ENCODE measurements at regions of chr14 and their contacts with region 1.

Region 1: GRCh38 chr14:65412032-65412846 is at the start of gene FUT8:
- DNase-seq: peak; percentile 89 to 99
- H3K4me3 ChIP-seq: peak within 1 kb of the TSS; percentile 97
- H3K27ac ChIP-seq: peak within 1 kb of the TSS; percentile 90
- H3K4me1 ChIP-seq: peaks cover 40% of the 10 kb centered on the region
- H3K27me3 ChIP-seq: no peaks in the 10 kb centered on the region
- CTCF ChIP-seq: peak; percentile 63
- total RNA-seq, gene FUT8: 134 and 135 TPM in 2 replicates

Region 2: GRCh38 chr14:65102441-65103149 is 309.6 kb before region 1 on chr14 and contains the start of gene MAX:
- CTCF ChIA-PET with region 1: no interaction called
- POLR2A ChIA-PET with region 1: no interaction called
- intact Hi-C with region 1: loop called (anchors 2 kb)
- DNase-seq: peak; percentile 96 to 99
- H3K4me3 ChIP-seq: peak within 1 kb of the TSS; percentile 88
- H3K27ac ChIP-seq: peak within 1 kb of the TSS; percentile 46
- H3K4me1 ChIP-seq: peaks cover 14% of the 10 kb centered on the region
- H3K27me3 ChIP-seq: no peaks in the 10 kb centered on the region
- CTCF ChIP-seq: no peak
- total RNA-seq, gene MAX: 76.1 and 84.1 TPM in 2 replicates

Region 3: GRCh38 chr14:65229751-65230749 is 182.2 kb before region 1 on chr14:
- CTCF ChIA-PET with region 1: no interaction called
- POLR2A ChIA-PET with region 1: interaction called, 7 read pairs
- intact Hi-C with region 1: loop called (anchors 2 kb)
- DNase-seq: peak; percentile 42 to 59
- H3K4me3 ChIP-seq: no peak overlapping the region
- H3K27ac ChIP-seq: peak overlapping the region; percentile 24
- H3K4me1 ChIP-seq: peaks cover 71% of the 10 kb centered on the region
- H3K27me3 ChIP-seq: no peaks in the 10 kb centered on the region
- CTCF ChIP-seq: no peak

Region 4: GRCh38 chr14:65287264-65288131 is 124.7 kb before region 1 on chr14:
- CTCF ChIA-PET with region 1: interaction called, 5 read pairs
- POLR2A ChIA-PET with region 1: interaction called, 32 read pairs
- intact Hi-C with region 1: loop called (anchors 1 kb)
- DNase-seq: no peak
- H3K4me3 ChIP-seq: no peak overlapping the region
- H3K27ac ChIP-seq: no peak overlapping the region
- H3K4me1 ChIP-seq: peaks cover 29% of the 10 kb centered on the region
- H3K27me3 ChIP-seq: no peaks in the 10 kb centered on the region
- CTCF ChIP-seq: no peak

Region 5: DNA sequence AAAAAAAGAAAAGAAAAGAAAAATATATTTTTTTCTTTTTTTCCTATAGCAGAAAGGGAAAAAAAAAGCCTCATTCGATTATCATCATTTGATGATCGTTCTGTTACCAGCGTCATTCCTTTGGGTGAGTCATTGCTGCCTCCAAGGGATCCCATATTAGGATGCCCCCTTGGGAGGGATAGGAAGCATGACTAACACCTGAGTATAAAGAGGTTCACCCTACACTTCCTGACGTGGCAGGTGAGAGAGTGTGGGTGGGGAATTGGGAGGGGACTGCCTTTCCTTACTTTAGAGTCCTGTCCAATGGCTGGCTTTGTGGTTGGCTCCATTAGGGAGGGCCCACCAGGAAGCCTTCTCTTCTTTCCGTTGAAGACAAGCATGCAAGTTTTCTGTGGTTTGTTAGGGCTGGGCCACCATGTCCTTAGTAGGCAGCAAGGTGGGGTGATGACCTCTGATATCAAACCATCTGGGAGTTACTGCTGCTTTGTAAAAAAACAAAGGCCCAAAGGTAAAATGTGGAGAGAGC is 55.8 kb before region 1 on chr14:
- CTCF ChIA-PET with region 1: interaction called, 4 read pairs
- POLR2A ChIA-PET with region 1: interaction called, 13 read pairs
- intact Hi-C with region 1: loop called (anchors 1 kb)
- DNase-seq: peak; percentile 97 to 100
- H3K4me3 ChIP-seq: peak overlapping the region; percentile 54
- H3K27ac ChIP-seq: peak overlapping the region; percentile 95
- H3K4me1 ChIP-seq: peaks cover 82% of the 10 kb centered on the region
- H3K27me3 ChIP-seq: no peaks in the 10 kb centered on the region
- CTCF ChIP-seq: no peak; the same call in 1 of the 2 replicates

Region 6: GRCh38 chr14:65462411-65462810 is 50.2 kb after region 1 on chr14:
- CTCF ChIA-PET with region 1: no interaction called
- POLR2A ChIA-PET with region 1: no interaction called
- intact Hi-C with region 1: no loop called
- DNase-seq: no peak
- H3K4me3 ChIP-seq: no peak overlapping the region
- H3K27ac ChIP-seq: peak overlapping the region; percentile 20
- H3K4me1 ChIP-seq: no peaks in the 10 kb centered on the region
- H3K27me3 ChIP-seq: no peaks in the 10 kb centered on the region
- CTCF ChIP-seq: no peak

Region 7: GRCh38 chr14:65613131-65613650 is 201.0 kb after region 1 on chr14:
- CTCF ChIA-PET with region 1: no interaction called
- POLR2A ChIA-PET with region 1: no interaction called
- intact Hi-C with region 1: no loop called
- DNase-seq: no peak
- H3K4me3 ChIP-seq: no peak overlapping the region
- H3K27ac ChIP-seq: no peak overlapping the region
- H3K4me1 ChIP-seq: no peaks in the 10 kb centered on the region
- H3K27me3 ChIP-seq: no peaks in the 10 kb centered on the region
- CTCF ChIP-seq: no peak

Region 8: DNA sequence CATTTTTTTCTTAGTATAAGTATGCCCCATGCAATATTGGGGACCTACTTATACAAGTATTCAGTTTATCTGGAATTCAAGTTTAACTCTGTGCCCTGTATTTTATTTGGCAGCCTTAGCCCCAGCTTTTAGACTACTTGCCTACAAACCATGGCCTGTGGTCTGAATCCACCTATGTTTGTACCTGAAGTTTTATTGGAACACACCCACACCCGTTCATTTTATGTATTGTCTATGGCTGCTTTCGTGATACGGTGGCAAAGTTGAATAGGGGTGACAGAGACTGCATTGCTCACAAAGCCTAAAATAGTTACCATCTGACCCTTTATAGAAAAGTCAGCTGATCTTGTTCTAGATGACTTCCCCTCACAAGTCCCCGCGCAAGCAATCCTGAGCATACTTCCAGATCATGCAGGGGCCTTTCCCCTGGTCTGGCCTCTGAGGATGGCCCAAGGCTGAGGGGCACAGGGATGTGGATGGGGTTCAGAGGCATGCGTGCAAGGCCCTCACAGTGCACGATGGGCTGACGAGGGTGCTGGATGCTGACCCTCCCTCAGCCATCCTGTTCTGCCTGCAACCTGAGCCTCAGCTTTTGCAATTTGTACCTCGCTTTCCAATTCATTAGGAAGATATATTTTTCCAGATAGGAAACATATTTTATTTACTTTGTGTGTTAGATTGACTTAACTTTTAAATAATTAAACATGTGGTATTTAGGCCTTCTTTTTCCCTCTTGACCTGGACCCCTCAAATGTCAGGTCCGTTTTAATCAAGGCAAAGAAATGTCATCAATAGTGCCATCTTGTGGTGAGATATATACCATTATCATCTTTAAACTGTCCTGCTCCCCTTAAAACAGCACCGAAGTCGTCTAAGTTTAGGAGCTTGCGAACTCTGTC is 546.7 kb after region 1 on chr14:
- CTCF ChIA-PET with region 1: interaction called, 3 read pairs
- POLR2A ChIA-PET with region 1: no interaction called
- intact Hi-C with region 1: loop called (anchors 5 kb)
- DNase-seq: no peak
- H3K4me3 ChIP-seq: no peak overlapping the region
- H3K27ac ChIP-seq: no peak overlapping the region
- H3K4me1 ChIP-seq: no peaks in the 10 kb centered on the region
- H3K27me3 ChIP-seq: no peaks in the 10 kb centered on the region
- CTCF ChIP-seq: peak; percentile 74

Measured in PC-9 (cell line).